ENCODE measurements at regions of chr20 and their contacts with region 1.

Region 1: DNA sequence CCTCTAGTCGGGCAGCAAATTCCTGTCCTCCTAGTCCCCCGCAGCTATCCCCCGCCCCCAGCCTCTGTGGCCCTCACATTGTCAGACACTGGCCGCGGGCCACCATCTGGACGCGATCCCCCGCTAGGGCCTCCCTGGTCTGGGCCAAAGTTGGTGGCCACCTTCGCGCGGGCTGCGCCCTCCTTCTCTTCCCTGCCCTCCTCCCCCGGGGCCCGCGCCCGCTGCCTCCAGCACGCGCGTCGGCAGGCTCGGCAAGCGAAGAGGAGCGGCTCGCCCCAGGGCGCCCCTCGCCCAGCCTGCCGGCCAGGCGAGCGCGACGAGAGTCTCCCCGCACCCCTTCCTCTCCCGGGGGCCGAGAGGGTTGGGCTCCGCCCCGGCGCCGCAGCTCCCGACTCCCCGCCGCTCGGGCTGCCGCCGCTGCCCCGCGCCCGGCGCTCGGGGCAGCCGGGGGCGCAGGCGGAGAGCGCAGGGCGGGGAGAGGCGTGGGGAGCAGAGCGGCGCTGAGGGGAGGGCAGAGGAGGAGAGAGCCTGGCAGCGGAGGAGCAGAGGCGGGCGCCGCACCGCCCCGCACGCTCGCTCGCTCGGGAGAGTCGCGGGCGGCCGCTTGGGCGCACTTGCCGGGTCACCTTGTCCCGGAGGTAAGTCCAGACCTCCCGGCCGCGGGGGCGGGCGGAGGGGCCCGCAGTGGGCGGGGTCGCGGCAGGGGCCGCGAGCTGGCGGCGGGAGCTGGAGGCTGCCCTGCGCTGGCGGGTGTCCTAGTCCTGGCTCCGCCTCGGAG is at the start of gene SYNDIG1:
- DNase-seq: peak in 1 of 2 donors; percentile 70
- H3K4me3 ChIP-seq: peak within 1 kb of the TSS; percentile 71 to 84
- H3K27ac ChIP-seq: peak within 1 kb of the TSS; percentile 80 to 82
- H3K4me1 ChIP-seq: peaks cover 0 to 10% of the 10 kb centered on the region in 2 donors
- H3K27me3 ChIP-seq: no peaks in the 10 kb centered on the region
- CTCF ChIP-seq: no peak
- total RNA-seq, gene SYNDIG1: 13.7 TPM

Region 2: DNA sequence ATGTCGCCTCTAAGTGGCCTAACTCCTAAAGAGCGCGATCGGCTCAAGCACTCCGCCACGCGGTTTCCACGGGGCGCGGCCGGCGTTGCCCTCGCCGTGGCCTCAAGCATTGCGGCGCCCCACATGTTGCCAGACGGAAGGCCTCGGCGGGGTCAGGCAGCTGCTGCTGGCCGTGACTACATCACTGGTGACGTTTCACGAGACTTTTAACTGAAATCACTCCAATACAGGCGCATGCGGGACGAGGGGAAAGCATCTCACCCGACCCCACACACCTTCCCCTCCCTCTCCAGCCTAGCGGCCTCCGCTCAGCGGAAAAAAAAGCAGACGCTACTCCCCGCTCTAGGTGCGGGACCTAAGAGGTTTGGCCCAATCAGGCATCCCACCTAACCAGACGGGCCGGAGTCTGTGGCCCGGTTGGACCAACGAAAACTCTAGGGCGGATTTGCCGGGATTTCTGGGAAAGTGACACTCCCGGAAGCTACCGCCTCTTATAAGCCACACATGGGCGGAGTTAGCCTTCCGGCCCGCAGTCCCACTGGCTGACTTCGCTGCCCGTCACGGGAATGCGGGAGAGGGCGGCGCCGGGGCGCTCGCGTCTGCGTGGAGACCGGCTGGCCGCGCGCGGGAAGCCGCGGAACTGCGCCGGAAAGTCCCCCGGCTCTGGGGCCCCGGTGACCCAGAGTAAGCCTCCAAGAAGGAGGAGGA is 1119.0 kb before region 1 on chr20 and contains the start of gene NXT1:
- intact Hi-C with region 1: loop called (anchors 10 kb)
- DNase-seq: peak; percentile 93 to 99
- H3K4me3 ChIP-seq: peak within 1 kb of the TSS; percentile 93 to 97
- H3K27ac ChIP-seq: peak within 1 kb of the TSS; percentile 99 to 100
- H3K4me1 ChIP-seq: peaks cover 3 to 18% of the 10 kb centered on the region in 2 donors
- H3K27me3 ChIP-seq: no peaks in the 10 kb centered on the region
- CTCF ChIP-seq: peak in 1 of 3 experiments; percentile 0
- total RNA-seq, gene NXT1: 50.0 TPM

Region 3: GRCh38 chr20:24303381-24303780 is 165.9 kb before region 1 on chr20:
- intact Hi-C with region 1: loop called (anchors 10 kb)
- DNase-seq: no peak
- H3K4me3 ChIP-seq: no peak overlapping the region
- H3K27ac ChIP-seq: no peak overlapping the region
- H3K4me1 ChIP-seq: no peaks in the 10 kb centered on the region
- H3K27me3 ChIP-seq: no peaks in the 10 kb centered on the region
- CTCF ChIP-seq: no peak

Region 4: DNA sequence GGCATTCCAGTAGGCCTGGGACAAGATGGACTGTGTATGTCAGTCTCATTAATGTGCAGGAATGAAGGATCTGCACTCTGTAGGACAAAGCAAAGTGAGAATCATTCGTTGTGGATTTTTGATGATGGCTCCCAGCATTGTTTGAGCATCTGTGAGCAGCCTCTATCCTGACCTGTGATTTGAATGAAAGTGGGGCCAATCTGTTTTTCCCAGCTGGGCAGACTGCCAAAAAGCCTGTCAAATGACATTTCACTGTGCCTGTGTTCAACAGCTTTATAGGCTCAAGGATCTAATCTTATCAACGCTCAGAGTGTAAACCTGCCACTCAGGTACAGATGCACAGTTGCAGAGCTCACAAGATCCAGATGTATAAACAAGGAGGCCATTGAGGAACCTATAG is 86.6 kb before region 1 on chr20:
- intact Hi-C with region 1: loop called (anchors 2 kb)
- DNase-seq: peak in 1 of 2 donors; percentile 54
- H3K4me3 ChIP-seq: no peak overlapping the region
- H3K27ac ChIP-seq: peak overlapping the region in 1 of 2 donors; percentile 3
- H3K4me1 ChIP-seq: peaks cover 0 to 20% of the 10 kb centered on the region in 2 donors
- H3K27me3 ChIP-seq: no peaks in the 10 kb centered on the region
- CTCF ChIP-seq: no peak

Region 5: DNA sequence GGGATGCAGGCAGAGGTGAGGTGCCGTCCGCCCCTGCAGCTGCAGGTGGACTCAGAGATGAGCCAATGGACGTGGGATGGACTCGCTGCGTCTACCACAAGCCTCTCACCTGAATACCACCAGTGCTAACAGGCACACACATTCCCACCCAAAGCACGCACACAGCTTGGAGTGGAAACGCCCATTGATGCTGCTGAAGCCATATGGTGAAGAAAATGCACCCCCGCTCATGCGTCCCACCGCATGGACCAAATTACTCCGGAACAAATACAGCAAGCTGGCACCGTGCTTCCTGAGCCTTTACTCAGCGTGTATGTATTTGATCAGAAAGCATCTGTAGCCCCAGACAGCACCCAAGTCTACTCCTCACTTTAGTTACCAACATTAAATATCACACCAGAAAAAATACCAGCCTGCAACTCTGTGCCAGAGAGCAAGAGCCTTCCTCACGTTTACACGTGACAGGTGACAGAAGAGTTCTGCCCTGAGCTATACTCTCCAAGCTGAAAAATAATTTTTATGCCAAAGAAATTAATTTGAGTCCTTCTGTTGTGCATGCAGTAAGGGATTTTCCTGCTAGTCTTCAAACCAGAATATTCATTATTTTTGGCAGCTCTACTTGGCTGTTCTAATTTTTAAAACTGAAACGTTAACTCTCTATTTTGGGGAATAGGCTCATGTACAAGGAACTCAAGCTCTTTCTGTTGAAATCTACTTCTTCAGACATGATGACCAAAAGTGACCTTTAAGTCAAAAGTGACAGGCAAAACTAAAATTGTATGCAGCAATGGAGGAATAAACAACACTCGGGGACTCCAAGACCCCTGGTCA is 58.1 kb before region 1 on chr20:
- intact Hi-C with region 1: loop called (anchors 2 kb)
- DNase-seq: no peak
- H3K4me3 ChIP-seq: no peak overlapping the region
- H3K27ac ChIP-seq: peak overlapping the region; percentile 74 to 81
- H3K4me1 ChIP-seq: peaks cover 0 to 27% of the 10 kb centered on the region in 2 donors
- H3K27me3 ChIP-seq: no peaks in the 10 kb centered on the region
- CTCF ChIP-seq: no peak

Measured in ascending aorta (tissue), 2 donors.